Head of caudate nucleus (tissue), 42 donors: ENCODE measurements at regions of chr12 and their contacts with region 1.

Region 1: DNA sequence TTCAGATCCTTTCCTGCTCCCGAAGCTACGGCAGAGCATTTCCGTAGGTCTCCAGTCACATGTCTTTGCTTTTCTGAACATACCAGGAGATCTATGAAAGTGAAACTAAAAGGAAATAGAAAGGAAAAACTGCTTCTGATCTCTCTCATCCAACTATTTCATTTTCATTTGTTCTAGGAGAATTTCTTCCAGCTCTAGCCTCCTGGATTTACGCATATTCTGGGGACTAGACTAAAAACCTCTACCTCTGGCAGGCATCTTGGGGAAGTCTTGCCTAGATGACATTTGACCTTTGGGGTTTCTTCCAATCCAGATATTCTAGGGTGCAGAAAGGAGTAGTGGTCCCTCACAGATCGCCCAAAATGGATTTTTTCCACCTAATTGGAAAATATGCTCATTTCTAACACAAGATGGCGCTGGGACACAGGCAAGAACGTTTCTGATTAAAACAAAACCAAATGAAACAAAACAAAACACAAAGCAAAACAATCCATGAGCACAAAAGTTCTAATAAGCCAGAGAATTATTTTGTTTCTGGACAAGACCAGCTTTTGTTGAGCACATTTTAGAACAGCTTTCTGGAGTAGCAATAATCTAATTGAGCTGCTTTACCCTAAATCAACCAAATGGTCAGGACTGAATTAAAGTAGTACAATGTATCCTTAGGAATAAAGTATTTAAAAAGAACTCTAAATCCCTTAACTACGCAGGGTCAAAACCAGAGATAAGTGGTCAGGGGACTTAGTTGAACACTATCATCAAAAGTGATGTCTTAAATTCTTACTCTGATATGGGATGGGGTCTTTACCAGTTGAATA is 12.3 kb upstream of the PARP11 start:
- DNase-seq: peak in 15 of 42 donors; percentile 3 to 71 (median 29)

Region 2: DNA sequence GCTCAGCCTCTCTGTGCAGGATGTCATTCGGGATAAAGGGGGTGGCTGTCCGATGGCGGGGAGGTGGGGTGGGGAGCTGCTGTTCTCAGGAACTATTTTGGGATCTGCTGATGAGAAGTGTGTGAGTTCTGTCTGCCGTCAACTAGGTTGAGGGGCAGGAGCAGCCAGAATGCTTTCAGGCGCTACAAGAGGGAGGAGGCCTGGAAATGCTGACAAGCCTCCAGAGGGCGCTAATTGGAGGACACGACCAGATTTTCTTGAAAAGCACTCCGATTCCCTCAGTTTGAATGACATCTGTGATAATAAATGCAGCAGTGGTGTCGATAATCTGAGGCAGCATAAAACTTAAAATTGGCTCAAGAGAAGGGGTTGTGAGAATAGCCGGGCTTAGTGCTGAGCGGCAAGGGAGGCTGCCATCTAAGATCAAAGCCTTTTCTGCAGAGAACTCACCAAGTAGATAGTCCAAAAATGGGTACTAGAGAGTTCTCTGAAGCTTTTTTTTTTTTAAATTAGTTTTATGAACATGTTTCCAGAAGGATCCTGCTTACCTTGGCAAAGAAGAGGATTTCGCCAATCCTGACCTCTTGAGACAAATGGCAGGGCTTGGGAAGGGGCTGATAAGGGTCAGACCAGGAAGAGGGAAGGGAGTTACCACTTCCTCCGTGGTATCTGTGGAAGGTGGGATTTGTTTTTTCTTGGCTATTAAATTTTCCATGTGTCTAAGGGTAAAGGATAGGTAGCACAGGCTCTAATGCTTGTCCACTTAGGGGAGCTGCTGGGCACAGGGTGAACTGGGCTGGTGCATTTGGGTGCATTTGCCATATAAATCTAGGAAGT is 226.9 kb before region 1 on chr12:
- intact Hi-C with region 1: no loop called
- DNase-seq: peak in 16 of 42 donors; percentile 16 to 52 (median 30)

Region 3: DNA sequence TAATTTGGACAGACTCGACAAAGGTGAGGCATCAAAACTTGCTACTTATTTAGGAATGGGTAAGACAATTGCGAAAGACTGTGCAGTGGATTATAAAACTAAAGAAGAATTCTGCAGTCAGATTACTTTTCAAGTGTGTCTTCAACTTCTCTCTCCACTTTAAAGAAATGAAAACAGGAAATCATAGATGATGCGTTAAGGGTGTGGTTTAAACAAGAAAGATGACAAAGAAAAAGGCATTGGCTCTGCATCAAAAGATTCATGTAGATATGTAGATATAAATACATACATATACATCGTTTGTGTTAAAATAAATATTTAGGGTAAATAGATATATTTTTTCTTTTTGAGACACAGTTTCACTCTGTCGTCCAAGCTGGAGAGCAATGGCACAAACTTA is 62.3 kb after region 1 on chr12:
- intact Hi-C with region 1: no loop called
- DNase-seq: no peak

Region 4: DNA sequence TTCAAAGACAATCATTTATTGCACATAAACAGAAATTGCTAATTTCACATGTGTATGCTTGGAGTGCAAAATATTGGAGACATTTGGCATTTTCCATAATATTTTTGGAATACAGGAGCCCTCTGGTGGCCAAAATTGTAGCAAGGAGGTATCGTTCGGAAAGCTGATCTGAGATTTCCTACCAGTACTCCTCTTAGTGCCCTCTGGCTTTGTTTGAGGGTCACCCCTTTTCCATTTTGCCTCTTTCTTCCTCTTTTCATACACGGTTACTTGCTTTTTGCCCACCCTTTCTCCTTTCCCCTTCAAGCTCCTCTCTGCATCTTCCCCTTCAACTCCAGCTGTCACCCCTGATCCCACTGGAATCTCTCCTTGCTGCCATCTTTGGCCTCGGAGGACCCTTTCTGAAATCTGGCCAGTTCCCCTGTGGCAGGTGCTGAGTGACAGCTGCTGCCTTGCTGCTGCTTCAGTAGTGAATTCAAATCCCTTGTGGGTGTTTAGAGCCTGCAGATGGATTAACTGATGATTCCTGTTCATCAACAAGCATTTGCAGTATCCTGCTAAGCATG is 152.3 kb after region 1 on chr12:
- intact Hi-C with region 1: loop called (anchors 5 kb)
- DNase-seq: peak in 30 of 42 donors; percentile 18 to 83 (median 52)

Region 5: DNA sequence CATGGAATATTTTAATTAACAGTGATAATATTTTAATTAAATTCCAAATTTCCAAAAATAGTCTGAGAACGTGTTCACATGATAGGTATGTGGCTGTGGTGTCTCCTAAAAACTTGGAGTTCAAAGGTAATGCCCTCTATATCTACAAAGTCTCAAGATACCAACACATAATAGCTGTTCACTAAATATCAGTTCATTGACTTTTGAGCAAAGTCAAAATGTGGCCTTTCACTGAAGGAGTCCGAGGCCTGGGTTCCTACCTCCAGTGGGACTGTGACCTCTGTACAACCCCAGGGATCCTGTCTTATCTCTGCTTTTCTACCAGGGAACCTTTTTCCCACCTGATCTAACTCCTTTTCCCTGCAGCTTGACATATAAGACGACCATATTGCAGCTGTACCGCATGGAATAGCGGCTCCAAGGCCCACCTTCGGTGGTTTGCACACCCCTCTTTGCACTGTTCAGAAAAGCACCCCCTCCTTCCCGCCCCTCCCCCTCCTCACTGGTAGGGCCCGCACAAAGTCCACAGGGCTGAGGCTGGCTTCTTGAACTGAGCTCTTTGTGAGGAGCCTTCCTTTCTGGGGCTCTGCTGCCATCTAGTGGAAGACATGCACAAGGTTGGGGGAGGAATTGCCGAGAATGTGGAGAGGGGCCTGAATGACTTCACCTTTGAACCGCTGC is 391.2 kb after region 1 on chr12:
- intact Hi-C with region 1: loop called (anchors 5 kb)
- DNase-seq: peak; percentile 63 to 95 (median 86)